Right lobe of liver (tissue), 6 donors: ENCODE measurements at regions of chr5 and their contacts with region 1.

Region 1: GRCh38 chr5:171336521-171337209 is 27.6 kb downstream of the TLX3 start:
- DNase-seq: peak in 1 of 3 donors; percentile 27
- ATAC-seq: peak; percentile 55 to 73 (median 66)
- H3K4me3 ChIP-seq: peak overlapping the region in 2 of 3 donors; percentile 20 to 23
- H3K27ac ChIP-seq: no peak overlapping the region
- H3K4me1 ChIP-seq: no peaks in the 10 kb centered on the region
- H3K27me3 ChIP-seq: peaks cover 0 to 3% of the 10 kb centered on the region in 2 donors
- CTCF ChIP-seq: peak; percentile 20 to 55 (median 44)
- POLR2A ChIP-seq: no peak

Region 2: DNA sequence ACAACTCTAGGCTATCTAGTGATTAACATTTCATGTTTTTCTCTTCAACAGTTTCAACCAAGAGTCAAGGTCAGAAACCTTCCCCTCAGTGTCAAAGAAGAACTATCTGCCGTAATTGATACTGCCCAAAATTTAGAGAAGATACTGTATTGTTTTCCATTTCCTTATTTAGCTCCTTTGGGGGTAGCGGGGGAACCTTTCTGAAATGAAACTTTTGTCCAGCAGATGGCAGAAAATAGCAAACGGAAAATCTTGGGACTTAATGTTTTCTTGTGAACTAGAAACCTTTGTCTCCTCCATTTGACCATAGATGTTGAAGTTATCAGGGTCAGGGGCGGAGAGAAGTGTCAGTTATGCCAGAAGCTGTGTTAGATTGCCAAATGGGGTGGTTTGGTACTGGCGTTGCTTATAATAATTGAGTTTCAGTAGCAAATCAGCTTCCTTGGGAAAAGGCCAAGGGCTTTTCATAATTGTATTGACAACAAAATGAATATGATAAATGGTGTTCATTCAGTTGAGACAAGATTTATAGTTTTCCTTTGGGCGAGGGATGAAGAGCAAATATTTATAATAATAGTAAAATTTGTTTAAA is 129.3 kb before region 1 on chr5:
- intact Hi-C with region 1: loop called in 1 of 2 experiments (anchors 10 kb)
- DNase-seq: no peak
- ATAC-seq: peak in 2 of 4 donors; percentile 42 to 51
- H3K4me3 ChIP-seq: no peak overlapping the region
- H3K27ac ChIP-seq: no peak overlapping the region
- H3K4me1 ChIP-seq: no peaks in the 10 kb centered on the region
- H3K27me3 ChIP-seq: no peaks in the 10 kb centered on the region
- CTCF ChIP-seq: peak; percentile 30 to 53 (median 46)
- POLR2A ChIP-seq: no peak